PC-9 (cell line): ENCODE measurements at regions of chr22 and their contacts with region 1.

Region 1: DNA sequence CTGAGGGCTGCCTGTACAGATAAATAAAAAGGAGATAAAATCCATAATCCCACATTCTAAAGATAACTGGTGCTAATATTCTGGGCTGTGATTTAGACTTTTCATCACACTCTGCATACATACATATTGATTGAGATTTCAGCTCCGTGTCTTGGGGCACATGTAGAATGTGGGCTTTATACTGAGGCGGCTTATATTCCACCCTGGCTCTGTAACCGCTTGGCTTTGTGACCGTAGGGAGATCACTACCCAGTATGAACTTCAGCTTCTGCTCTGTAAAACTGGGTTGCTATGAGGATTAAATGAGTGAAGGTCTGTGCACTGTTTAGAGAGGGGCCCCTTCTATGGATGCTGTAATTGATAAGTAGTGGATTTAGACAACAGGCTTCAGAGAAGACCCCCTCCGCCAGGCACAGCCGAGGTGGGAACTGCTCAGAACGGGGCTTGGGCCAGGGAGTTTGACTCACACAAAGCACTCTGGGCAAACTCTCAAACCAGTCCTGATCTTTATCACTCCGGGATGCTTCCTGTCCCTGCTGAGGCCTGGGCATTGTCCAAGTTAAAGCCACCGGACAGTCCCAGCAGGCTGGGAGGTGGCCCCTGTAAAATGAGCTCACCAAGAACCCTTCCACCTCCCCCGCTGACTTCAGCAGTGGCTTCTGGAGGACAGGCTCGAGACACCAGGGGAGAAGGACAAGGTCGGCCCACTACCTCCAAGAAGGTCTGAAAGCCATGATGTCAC is 17.2 kb downstream of the KIAA1671 start:
- DNase-seq: peak; percentile 75 to 88
- H3K4me3 ChIP-seq: no peak overlapping the region; the same call in 1 of the 2 replicates
- H3K27ac ChIP-seq: peak overlapping the region; percentile 78
- H3K4me1 ChIP-seq: peaks cover 60% of the 10 kb centered on the region
- H3K27me3 ChIP-seq: no peaks in the 10 kb centered on the region
- CTCF ChIP-seq: no peak

Region 2: GRCh38 chr22:24938741-24939341 is 30.9 kb before region 1 on chr22:
- CTCF ChIA-PET with region 1: no interaction called
- POLR2A ChIA-PET with region 1: no interaction called
- intact Hi-C with region 1: no loop called
- DNase-seq: no peak
- H3K4me3 ChIP-seq: no peak overlapping the region
- H3K27ac ChIP-seq: no peak overlapping the region
- H3K4me1 ChIP-seq: no peaks in the 10 kb centered on the region
- H3K27me3 ChIP-seq: no peaks in the 10 kb centered on the region
- CTCF ChIP-seq: peak; percentile 85

Region 3: DNA sequence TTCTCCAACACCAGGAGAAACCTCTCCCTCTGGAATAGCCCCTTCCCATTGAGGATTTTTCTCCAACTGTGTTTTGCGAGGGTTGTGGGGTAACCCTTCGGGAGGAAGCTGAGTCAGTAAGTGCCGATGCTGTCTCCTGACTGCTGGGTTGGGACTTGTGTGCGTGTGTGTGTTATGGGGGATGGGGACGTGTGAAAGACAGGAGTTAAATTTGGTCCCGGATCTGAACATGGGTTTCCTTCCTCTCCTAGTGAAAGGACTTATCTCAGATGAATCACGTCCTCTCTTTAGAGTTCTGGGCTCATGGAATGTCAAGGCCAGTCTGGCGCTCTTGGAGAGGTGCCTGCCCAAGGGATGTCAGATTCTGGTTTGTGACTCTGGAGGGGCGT is 16.1 kb after region 1 on chr22:
- CTCF ChIA-PET with region 1: interaction called, 13 read pairs
- POLR2A ChIA-PET with region 1: no interaction called
- intact Hi-C with region 1: no loop called
- DNase-seq: no peak
- H3K4me3 ChIP-seq: no peak overlapping the region
- H3K27ac ChIP-seq: no peak overlapping the region
- H3K4me1 ChIP-seq: peaks cover 9% of the 10 kb centered on the region
- H3K27me3 ChIP-seq: no peaks in the 10 kb centered on the region
- CTCF ChIP-seq: no peak

Region 4: DNA sequence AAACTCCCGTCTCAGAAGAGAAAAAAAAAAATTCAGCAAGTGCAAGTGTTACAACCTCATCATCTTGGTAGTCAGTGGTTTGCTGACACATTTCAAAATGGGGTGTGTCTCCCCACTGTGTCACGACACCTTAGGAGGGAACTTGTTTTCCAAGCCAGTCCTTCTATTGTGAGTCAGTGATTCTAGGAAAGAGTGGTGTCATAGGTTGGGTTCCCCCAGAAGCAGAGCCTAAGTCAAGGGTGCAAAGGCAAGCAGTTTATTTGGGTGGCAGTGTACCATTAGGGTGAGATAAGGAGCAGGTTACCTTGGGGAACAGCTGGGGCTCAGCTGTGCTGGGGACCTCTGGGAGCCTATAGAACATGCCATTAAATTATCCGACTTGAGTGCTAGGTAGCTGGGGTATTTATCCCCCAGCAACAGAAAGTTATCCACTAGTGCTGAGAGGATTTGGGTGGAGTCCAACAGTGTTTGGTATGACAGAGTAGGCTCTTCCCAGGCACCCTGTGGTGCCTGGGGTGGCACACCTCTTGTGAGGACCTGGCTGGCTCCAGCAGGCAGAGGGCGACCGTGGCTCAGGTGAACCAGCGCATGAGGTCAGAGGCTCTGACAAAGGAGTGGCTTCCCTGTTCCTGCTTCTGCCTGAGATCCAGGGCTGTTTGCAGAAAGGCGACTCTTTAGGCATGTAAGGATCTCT is 24.5 kb after region 1 on chr22:
- CTCF ChIA-PET with region 1: no interaction called
- POLR2A ChIA-PET with region 1: interaction called, 3 read pairs
- intact Hi-C with region 1: loop called (anchors 1 kb)
- DNase-seq: peak; percentile 75 to 97
- H3K4me3 ChIP-seq: no peak overlapping the region
- H3K27ac ChIP-seq: peak overlapping the region; percentile 96
- H3K4me1 ChIP-seq: peaks cover 75% of the 10 kb centered on the region
- H3K27me3 ChIP-seq: no peaks in the 10 kb centered on the region
- CTCF ChIP-seq: peak; percentile 65

Region 5: DNA sequence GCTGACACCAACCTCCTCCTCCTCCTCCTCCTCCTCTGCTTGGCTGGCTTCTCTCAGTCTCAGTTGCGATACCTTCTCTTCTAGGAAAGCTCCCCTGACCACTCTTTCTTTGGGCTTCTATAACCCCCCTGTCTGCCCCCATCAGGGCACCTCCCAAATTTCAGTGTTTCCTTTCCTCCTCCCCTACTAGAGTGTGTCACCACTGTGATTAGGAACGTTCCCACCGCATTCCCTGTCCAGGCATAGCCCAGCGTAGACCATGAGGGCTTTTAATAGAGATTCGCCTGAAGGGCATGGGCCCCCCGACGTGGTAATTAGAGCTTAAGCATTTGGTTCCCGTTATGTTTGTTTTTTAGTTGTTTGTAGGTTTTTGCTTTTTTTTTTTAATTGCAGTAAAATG is 48.3 kb after region 1 on chr22:
- CTCF ChIA-PET with region 1: no interaction called
- POLR2A ChIA-PET with region 1: no interaction called
- intact Hi-C with region 1: no loop called
- DNase-seq: no peak
- H3K4me3 ChIP-seq: no peak overlapping the region
- H3K27ac ChIP-seq: no peak overlapping the region
- H3K4me1 ChIP-seq: no peaks in the 10 kb centered on the region
- H3K27me3 ChIP-seq: no peaks in the 10 kb centered on the region
- CTCF ChIP-seq: no peak

Region 6: GRCh38 chr22:25027959-25028840 is 58.5 kb after region 1 on chr22:
- CTCF ChIA-PET with region 1: interaction called, 4 read pairs
- POLR2A ChIA-PET with region 1: interaction called, 10 read pairs
- intact Hi-C with region 1: no loop called
- DNase-seq: no peak
- H3K4me3 ChIP-seq: no peak overlapping the region
- H3K27ac ChIP-seq: no peak overlapping the region
- H3K4me1 ChIP-seq: peaks cover 28% of the 10 kb centered on the region
- H3K27me3 ChIP-seq: no peaks in the 10 kb centered on the region
- CTCF ChIP-seq: peak; percentile 42

Region 7: DNA sequence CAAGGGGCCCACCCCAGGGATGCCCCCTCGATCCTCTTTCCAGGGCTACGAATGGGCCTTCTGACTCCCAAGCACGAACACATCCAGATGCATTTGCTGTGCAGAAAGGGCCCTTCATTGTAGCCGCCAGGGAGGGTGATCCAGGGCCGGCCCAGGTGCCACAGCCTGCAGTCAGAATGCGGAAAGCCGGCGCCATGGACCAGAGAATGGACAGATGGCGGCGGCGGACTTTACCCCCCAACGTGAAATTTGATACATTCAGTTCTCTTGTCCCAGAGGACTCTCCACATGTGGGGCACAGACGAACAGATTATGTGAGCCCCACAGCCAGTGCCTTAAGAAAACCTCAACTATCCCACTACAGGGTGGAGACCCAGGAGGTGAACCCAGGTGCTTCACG is 70.0 kb after region 1 on chr22:
- CTCF ChIA-PET with region 1: no interaction called
- POLR2A ChIA-PET with region 1: no interaction called
- intact Hi-C with region 1: no loop called
- DNase-seq: no peak
- H3K4me3 ChIP-seq: no peak overlapping the region
- H3K27ac ChIP-seq: no peak overlapping the region
- H3K4me1 ChIP-seq: no peaks in the 10 kb centered on the region
- H3K27me3 ChIP-seq: no peaks in the 10 kb centered on the region
- CTCF ChIP-seq: no peak